GM13976 (cell line): ENCODE measurements at regions of chr4 and their contacts with region 1.

Region 1: GRCh38 chr4:181528570-181529184 is 714.5 kb upstream of the TENM3 start:
- DNase-seq: peak; percentile 33
- CTCF ChIP-seq: peak; percentile 88

Region 2: GRCh38 chr4:180766944-180767729 is 761.5 kb before region 1 on chr4:
- in situ Hi-C with region 1: no loop called
- DNase-seq: no peak
- CTCF ChIP-seq: no peak

Region 3: DNA sequence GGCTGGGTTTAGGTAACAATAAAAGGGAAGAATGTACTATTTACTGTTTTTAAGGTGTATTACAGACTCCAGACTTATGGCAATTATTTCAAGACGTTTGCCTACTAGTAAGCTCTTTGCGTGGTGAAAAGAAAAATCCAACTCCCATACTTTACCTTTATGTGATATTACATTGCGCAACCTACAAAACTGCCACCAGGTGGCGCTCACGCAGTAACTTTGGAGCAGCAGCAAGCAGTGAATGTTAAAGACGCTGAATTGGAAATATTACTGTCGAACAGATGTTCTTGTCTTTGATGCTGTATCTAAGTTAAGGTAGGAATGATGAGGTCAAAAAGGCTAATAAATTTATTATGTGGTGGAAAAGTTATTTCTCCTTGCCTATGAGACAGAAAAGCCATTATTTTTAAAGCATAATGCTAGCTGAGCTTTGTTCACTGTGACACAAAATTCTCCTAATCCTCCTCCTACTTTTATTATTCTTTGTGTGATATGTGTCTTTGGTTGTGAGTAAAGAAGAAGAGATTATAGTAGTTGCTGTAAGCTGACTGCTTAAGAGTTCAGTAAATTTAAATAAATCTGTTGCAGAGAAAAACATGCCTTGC is 385.3 kb before region 1 on chr4:
- in situ Hi-C with region 1: loop called (anchors 25 kb)
- DNase-seq: peak; percentile 53
- CTCF ChIP-seq: peak; percentile 92

Region 4: DNA sequence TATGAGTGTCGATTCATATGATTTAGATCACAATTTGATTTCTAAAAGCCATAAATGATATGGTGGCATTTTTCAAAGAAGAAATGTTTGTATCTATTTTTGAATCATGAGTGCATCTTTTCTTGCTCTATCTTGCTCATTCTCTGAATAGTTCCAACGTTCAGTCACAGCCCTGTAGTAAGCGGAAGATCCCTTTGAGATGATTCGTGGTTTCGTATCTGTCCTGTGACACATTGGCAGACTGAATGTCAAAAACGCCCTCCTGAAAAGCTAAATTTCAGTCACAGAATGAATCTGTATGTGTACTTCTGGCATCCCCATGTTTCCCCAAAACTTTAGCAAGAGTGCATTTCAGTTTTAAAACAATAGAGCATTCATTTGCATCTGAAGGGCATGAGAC is 352.4 kb before region 1 on chr4:
- in situ Hi-C with region 1: no loop called
- DNase-seq: no peak
- CTCF ChIP-seq: no peak

Region 5: DNA sequence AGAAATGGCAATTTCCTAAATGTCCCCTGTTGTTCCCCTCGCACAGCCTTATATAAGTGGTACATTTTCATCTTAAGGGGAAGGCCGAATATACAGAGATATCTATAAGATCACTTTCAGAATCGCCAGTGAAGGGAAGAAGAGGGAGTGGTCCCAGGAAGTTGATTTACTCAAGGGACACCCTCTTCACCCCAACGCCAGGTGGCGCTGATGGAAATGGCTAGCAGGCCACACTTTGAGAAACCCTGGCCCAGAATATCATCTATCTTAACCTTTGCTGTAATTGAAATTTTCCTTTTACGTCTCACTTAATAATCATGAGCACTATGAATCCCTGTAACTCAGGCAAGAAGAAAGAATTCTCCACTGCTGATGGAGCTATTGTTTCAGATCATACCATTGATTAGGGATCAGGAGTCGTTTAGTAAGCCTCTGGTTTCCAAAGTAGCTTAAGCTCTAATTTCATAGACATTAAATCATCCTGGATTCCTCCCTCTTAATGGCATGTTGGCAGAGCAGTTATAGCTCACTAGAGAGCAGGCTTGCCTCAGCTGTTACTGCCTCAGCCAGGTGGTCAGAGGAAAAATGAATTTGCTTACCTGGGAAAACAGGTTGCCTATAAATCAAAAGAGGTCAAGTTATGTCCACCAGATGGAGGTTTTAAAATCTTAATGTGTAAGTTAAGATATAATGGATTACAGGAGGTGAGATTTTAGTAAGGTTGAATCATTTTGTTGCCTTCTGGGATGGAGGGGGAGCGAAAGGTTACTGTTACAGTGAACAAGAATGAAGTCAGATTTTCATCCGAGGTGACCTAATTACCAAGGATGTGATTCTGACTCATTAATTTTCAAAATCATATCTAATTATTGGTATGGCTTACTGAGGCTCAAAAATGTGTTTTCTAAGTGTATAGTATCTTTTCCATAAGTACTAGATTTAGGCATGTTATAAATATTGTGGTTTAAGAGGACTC is 226.7 kb before region 1 on chr4:
- in situ Hi-C with region 1: loop called (anchors 10 kb)
- DNase-seq: peak; percentile 21
- CTCF ChIP-seq: peak; percentile 56